Activated CD4-positive, alpha-beta memory T cell treated with anti-CD3 and anti-CD28 coated beads, Interleukin-2, amount 10 ng/mL, durations not matched to agents 7 days and 5 days (primary cell): ENCODE measurements at regions of chr5 and their contacts with region 1.

Region 1: GRCh38 chr5:61331407-61332357 is at the start of gene ZSWIM6:
- DNase-seq: peak; percentile 99
- H3K4me3 Mint-ChIP-seq: peak within 1 kb of the TSS; percentile 94
- H3K27ac Mint-ChIP-seq: peak within 1 kb of the TSS; percentile 91
- H3K4me1 Mint-ChIP-seq: peaks cover 43% of the 10 kb centered on the region
- H3K27me3 Mint-ChIP-seq: peaks cover 35% of the 10 kb centered on the region
- total RNA-seq, gene ZSWIM6: 6.8 to 7.1 TPM

Region 2: GRCh38 chr5:61162010-61162831 is 169.5 kb before region 1 on chr5 and contains the start of gene SMIM15:
- CTCF ChIA-PET with region 1: interaction called, 3 read pairs
- POLR2A ChIA-PET with region 1: interaction called, 17 read pairs
- DNase-seq: peak; percentile 86
- H3K4me3 Mint-ChIP-seq: peak within 1 kb of the TSS; percentile 93
- H3K27ac Mint-ChIP-seq: peak within 1 kb of the TSS; percentile 89
- H3K4me1 Mint-ChIP-seq: peaks cover 41% of the 10 kb centered on the region
- H3K27me3 Mint-ChIP-seq: no peaks in the 10 kb centered on the region
- total RNA-seq, gene SMIM15: 48.5 to 50.9 TPM

Region 3: GRCh38 chr5:61306511-61307131 is 25.1 kb before region 1 on chr5:
- CTCF ChIA-PET with region 1: interaction called, 3 read pairs
- POLR2A ChIA-PET with region 1: interaction called, 10 read pairs
- DNase-seq: no peak
- H3K4me3 Mint-ChIP-seq: no peak overlapping the region
- H3K27ac Mint-ChIP-seq: peak overlapping the region; percentile 52
- H3K4me1 Mint-ChIP-seq: peaks cover 23% of the 10 kb centered on the region
- H3K27me3 Mint-ChIP-seq: peaks cover 3% of the 10 kb centered on the region

Region 4: GRCh38 chr5:61357745-61358144 is 26.1 kb after region 1 on chr5:
- CTCF ChIA-PET with region 1: no interaction called
- POLR2A ChIA-PET with region 1: no interaction called
- DNase-seq: no peak
- H3K4me3 Mint-ChIP-seq: no peak overlapping the region
- H3K27ac Mint-ChIP-seq: no peak overlapping the region
- H3K4me1 Mint-ChIP-seq: peaks cover 2% of the 10 kb centered on the region
- H3K27me3 Mint-ChIP-seq: no peaks in the 10 kb centered on the region